ENCODE measurements at regions of chr21 and their contacts with region 1.

Region 1: DNA sequence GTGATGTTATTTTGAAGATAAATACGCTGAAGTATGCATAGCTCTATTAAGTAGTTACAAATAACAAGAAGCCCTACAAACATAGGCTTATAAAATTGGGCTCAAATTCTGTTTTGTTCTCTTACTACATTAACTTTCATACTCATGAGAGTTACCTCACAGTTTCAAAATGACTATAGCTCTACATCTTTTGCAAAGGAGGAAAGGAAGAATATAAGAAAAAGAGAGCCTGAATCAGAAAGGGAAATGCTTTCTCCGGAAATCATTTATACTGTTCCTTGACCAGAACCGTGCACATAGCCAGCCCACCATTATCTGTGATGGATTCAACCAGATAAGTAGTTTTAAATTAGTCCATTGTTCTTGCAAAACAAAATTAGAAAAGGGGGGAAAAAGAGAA is 1252.1 kb downstream of the NCAM2 start:
- DNase-seq: no peak
- H3K4me3 ChIP-seq: no peak overlapping the region
- H3K27ac ChIP-seq: no peak overlapping the region
- H3K4me1 ChIP-seq: no peaks in the 10 kb centered on the region
- H3K27me3 ChIP-seq: no peaks in the 10 kb centered on the region
- CTCF ChIP-seq: no peak

Region 2: GRCh38 chr21:20874202-20874601 is 1376.2 kb before region 1 on chr21:
- intact Hi-C with region 1: loop called (anchors 5 kb)
- DNase-seq: no peak
- H3K4me3 ChIP-seq: no peak overlapping the region
- H3K27ac ChIP-seq: no peak overlapping the region
- H3K4me1 ChIP-seq: no peaks in the 10 kb centered on the region
- H3K27me3 ChIP-seq: no peaks in the 10 kb centered on the region
- CTCF ChIP-seq: no peak

Region 3: DNA sequence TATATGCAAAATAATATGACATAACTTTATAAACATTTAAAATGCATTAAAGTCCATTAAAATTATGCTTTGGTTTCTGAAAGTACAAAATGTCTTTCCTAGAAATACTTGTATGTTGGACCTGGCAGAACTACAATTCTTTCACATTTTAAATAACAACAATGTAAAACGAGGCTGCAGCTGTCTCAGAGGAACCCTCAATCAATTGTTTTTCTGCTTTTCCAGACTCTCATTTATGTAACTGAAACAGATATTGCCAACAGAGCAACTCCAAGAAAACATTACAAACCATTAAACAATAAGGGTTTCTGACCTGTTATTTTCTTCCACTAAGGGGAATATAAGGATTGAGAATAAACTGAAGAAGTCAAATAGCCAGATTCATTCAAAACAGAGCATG is 58.8 kb before region 1 on chr21:
- intact Hi-C with region 1: no loop called
- DNase-seq: no peak
- H3K4me3 ChIP-seq: no peak overlapping the region
- H3K27ac ChIP-seq: no peak overlapping the region
- H3K4me1 ChIP-seq: no peaks in the 10 kb centered on the region
- H3K27me3 ChIP-seq: no peaks in the 10 kb centered on the region
- CTCF ChIP-seq: no peak

Region 4: GRCh38 chr21:22764222-22764621 is 513.9 kb after region 1 on chr21:
- intact Hi-C with region 1: no loop called
- DNase-seq: no peak
- H3K4me3 ChIP-seq: no peak overlapping the region
- H3K27ac ChIP-seq: no peak overlapping the region
- H3K4me1 ChIP-seq: no peaks in the 10 kb centered on the region
- H3K27me3 ChIP-seq: no peaks in the 10 kb centered on the region
- CTCF ChIP-seq: no peak